ENCODE measurements at regions of chr7 and their contacts with region 1.

Region 1: DNA sequence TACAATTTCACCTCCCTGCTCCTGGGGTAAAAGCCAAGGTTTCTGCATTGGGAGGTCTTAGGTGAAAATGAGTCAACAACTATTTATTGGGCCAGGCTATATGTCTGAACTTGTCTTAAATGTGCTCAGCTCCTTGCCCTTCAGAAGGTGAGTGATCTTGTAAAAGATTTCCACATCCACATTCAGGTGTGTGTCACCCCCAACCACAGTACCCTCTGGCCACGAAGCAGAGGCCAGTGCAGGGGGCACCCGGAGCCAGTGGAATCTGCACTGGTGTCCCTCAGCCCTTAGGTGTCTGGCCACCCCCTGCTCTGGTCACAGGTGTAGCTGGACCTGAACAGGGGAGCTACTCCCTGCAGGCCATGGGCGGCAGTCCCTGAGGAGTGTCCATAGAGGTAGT is 198.5 kb downstream of the PAXIP1 start:
- DNase-seq: no peak
- ATAC-seq: no peak
- H3K4me3 ChIP-seq: no peak overlapping the region
- H3K27ac ChIP-seq: no peak overlapping the region
- H3K4me1 ChIP-seq: no peaks in the 10 kb centered on the region
- H3K27me3 ChIP-seq: no peaks in the 10 kb centered on the region
- CTCF ChIP-seq: no peak
- POLR2A ChIP-seq: no peak

Region 2: GRCh38 chr7:154867068-154867467 is 62.6 kb after region 1 on chr7:
- intact Hi-C with region 1: loop called (anchors 10 kb)
- DNase-seq: no peak
- ATAC-seq: no peak
- H3K4me3 ChIP-seq: no peak overlapping the region
- H3K27ac ChIP-seq: no peak overlapping the region
- H3K4me1 ChIP-seq: no peaks in the 10 kb centered on the region
- H3K27me3 ChIP-seq: no peaks in the 10 kb centered on the region
- CTCF ChIP-seq: no peak
- POLR2A ChIP-seq: no peak

Region 3: GRCh38 chr7:155066417-155066950 is 262.0 kb after region 1 on chr7:
- intact Hi-C with region 1: no loop called
- DNase-seq: peak; percentile 72 to 85 (median 82)
- ATAC-seq: peak; percentile 73
- H3K4me3 ChIP-seq: no peak overlapping the region
- H3K27ac ChIP-seq: no peak overlapping the region
- H3K4me1 ChIP-seq: no peaks in the 10 kb centered on the region
- H3K27me3 ChIP-seq: peaks cover 0 to 9% of the 10 kb centered on the region in 2 donors
- CTCF ChIP-seq: no peak
- POLR2A ChIP-seq: no peak

Region 4: GRCh38 chr7:155234158-155234492 is 429.7 kb after region 1 on chr7:
- intact Hi-C with region 1: no loop called
- DNase-seq: peak; percentile 50 to 72 (median 60)
- ATAC-seq: no peak
- H3K4me3 ChIP-seq: no peak overlapping the region
- H3K27ac ChIP-seq: peak overlapping the region; percentile 74 to 91 (median 88)
- H3K4me1 ChIP-seq: peaks cover 38% of the 10 kb centered on the region
- H3K27me3 ChIP-seq: no peaks in the 10 kb centered on the region
- CTCF ChIP-seq: peak in 5 of 7 experiments; percentile 12 to 49 (median 36)
- POLR2A ChIP-seq: no peak

Measured in body of pancreas (tissue), 4 donors.